GM10248 (cell line): ENCODE measurements at regions of chr3 and their contacts with region 1.

Region 1: DNA sequence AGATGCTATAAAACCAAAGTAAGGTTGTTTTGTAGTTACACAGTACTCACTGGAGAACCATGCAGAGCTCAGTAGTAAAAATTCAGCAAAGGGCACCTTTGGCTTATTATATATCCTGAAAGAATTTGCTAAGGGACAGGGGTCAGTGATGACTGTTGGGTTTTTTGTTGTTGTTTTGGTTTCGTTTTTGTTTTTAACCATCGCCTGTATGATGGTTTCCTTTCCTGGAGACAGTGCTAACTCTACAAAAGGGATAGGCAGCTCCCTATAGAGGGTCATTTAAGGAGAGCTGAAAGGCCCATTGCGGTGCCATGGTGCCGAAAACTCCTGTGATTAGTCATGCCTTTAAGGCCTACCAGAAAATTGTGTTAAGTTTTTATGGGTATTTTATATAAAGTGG is 118.2 kb upstream of the GOLIM4 start:
- DNase-seq: peak; percentile 40
- CTCF ChIP-seq: no peak

Region 2: GRCh38 chr3:167734498-167735232 is 479.3 kb before region 1 on chr3 and contains the start of gene PDCD10:
- CTCF ChIA-PET with region 1: no interaction called
- POLR2A ChIA-PET with region 1: no interaction called
- DNase-seq: peak; percentile 90
- CTCF ChIP-seq: no peak

Region 3: GRCh38 chr3:168249550-168250414 is 35.9 kb after region 1 on chr3:
- CTCF ChIA-PET with region 1: interaction called, 12 read pairs
- POLR2A ChIA-PET with region 1: no interaction called
- DNase-seq: peak; percentile 87
- CTCF ChIP-seq: peak; percentile 49

Region 4: GRCh38 chr3:168470380-168470779 is 256.5 kb after region 1 on chr3:
- CTCF ChIA-PET with region 1: interaction called, 12 read pairs
- POLR2A ChIA-PET with region 1: no interaction called
- DNase-seq: no peak
- CTCF ChIP-seq: no peak

Region 5: GRCh38 chr3:168620826-168621225 is 406.9 kb after region 1 on chr3:
- CTCF ChIA-PET with region 1: interaction called, 41 read pairs
- POLR2A ChIA-PET with region 1: no interaction called
- DNase-seq: no peak
- CTCF ChIP-seq: peak; percentile 44

Region 6: DNA sequence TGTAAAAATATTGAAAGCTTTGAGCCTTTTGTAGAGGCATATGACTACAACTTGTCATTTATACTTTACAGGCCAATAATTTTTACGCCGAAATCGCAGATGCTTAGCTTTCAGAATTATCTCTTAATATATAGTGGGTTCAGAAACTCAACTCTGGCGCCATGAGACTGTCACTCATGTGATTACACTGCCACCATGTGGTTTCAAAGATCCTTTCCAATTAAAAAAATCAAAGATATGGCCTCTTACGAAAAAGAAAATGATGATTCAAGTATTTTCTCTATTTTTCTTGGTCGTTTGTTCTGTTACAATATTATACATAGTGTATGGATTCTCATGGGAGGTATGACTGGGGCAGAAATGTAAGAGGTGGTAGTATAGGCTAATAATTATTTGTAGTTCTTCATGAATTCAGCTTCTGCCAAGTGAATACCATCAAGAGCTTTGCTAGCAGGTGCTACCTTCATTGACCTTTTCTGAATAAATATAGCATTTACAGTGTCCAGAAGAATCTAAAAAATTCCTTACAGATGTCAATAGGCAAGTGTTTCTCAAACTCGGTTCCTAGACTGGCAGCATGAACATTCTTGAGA is 633.5 kb after region 1 on chr3:
- CTCF ChIA-PET with region 1: interaction called, 47 read pairs
- POLR2A ChIA-PET with region 1: no interaction called
- DNase-seq: peak; percentile 14
- CTCF ChIP-seq: peak; percentile 46